ENCODE measurements at regions of chr15 and their contacts with region 1.

Region 1: DNA sequence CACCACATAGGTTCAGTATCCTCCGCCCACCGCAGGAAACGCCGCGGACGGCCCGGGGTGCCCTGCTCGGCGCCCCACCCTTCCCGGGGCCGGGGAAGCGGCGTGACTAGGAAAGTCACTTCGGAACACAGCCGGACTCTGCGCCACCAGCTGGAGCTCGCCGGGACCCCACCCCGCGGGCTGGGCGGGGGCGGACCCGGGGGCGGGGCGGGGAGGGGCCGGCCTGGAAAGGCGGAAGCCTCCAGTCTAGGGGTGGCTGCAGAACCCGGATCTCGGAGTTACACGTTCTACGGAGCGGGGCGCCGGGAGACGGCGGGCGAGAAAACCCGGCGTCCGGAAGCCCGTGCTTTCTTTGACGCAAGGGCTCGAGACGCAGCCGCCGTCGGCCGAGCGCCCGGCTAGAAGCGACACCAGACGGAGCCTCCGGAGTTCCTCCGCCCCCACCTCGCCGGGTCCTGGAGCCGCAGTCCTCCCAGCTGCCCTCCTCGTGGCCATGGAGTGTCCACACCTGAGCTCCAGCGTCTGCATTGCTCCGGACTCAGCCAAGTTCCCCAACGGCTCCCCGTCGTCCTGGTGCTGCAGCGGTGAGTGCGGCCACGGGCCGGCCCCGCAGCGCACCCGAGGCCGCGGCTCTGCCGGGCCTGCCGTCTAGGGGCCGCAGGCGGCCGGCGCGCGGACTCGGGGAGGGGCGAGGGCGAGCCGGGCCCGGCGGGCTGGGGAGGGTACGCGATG is at the start of gene USP3:
- DNase-seq: peak; percentile 86
- ATAC-seq: peak; percentile 83
- H3K4me3 ChIP-seq: peak within 1 kb of the TSS; percentile 86 to 91 (median 90)
- H3K27ac ChIP-seq: peak within 1 kb of the TSS; percentile 93
- H3K4me1 ChIP-seq: peaks cover 67% of the 10 kb centered on the region
- H3K27me3 ChIP-seq: no peaks in the 10 kb centered on the region; a peak in 1 of 5 replicates
- CTCF ChIP-seq: peak; percentile 38
- EP300 ChIP-seq: peak; percentile 46 to 61; a peak in 1 of 4 replicates
- POLR2A ChIP-seq: peak; percentile 80 to 84
- RAD21 ChIP-seq: 0 out of 2 replicates have a peak, but pooled peaks have one; percentile 26
- total RNA-seq, gene USP3: 55.9 and 61.2 TPM in 2 replicates

Region 2: GRCh38 chr15:63466378-63467192 is 37.8 kb before region 1 on chr15:
- CTCF ChIA-PET with region 1: no interaction called
- POLR2A ChIA-PET with region 1: interaction called, 5 read pairs
- in situ Hi-C with region 1: loop called (anchors 5 kb)
- intact Hi-C with region 1: no loop called
- DNase-seq: peak; percentile 66
- ATAC-seq: peak; percentile 87
- H3K4me3 ChIP-seq: peak overlapping the region in 1 of 3 experiments; percentile 44; a peak in 2 of 6 replicates
- H3K27ac ChIP-seq: peak overlapping the region; percentile 33
- H3K4me1 ChIP-seq: peaks cover 70% of the 10 kb centered on the region
- H3K27me3 ChIP-seq: no peaks in the 10 kb centered on the region
- CTCF ChIP-seq: peak; percentile 89
- EP300 ChIP-seq: peak in 1 of 2 experiments; percentile 78; a peak in 2 of 4 replicates
- POLR2A ChIP-seq: no peak
- RAD21 ChIP-seq: peak; percentile 60

Region 3: DNA sequence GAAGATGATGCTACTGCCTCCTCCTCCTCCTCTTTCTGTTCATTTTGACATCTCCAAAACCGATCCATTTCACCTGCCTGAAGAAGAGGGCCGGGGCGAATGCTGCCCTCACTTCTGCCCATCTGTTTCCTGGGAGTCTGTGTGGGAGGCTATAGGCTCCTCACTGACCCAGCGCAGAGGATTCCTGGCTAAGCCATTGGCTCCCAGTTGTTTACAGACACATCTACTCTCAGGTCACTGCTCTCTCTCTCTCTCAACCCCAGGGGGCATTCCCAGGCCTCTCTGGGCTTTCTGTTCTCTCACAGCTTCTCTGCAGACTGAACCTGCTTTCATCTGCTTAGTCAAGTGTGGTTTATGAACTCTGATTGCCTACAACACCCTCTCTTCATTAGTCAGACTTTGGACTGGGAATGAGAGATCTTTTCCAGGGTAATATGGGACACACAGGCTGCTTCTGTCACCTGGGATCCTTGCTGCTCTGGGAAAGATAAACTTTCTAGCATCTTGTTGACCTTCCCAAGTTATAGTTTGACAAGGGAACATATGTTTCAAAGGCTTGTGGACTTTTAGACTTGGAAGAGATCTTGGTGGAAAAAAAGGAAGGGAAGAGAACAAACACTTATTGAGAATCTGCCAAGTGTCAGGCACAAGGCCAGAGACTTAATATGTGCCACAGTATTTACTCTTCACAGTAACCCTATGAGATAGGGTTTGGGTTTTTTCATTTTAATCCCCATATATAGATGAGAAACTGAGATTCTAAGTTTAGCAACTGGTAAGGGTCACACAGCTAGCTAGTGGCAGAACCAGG is 30.2 kb before region 1 on chr15:
- CTCF ChIA-PET with region 1: no interaction called
- POLR2A ChIA-PET with region 1: interaction called, 82 read pairs
- in situ Hi-C with region 1: loop called (anchors 5 kb)
- intact Hi-C with region 1: loop called (anchors 1 kb)
- DNase-seq: peak; percentile 99
- ATAC-seq: peak; percentile 94
- H3K4me3 ChIP-seq: peak overlapping the region in 2 of 3 experiments; percentile 32 to 52; a peak in 4 of 6 replicates
- H3K27ac ChIP-seq: peak overlapping the region; percentile 90
- H3K4me1 ChIP-seq: peaks cover 72% of the 10 kb centered on the region
- H3K27me3 ChIP-seq: no peaks in the 10 kb centered on the region
- CTCF ChIP-seq: peak; percentile 54
- EP300 ChIP-seq: peak; percentile 76 to 94; a peak in 3 of 4 replicates
- POLR2A ChIP-seq: peak; percentile 76 to 77
- RAD21 ChIP-seq: peak; percentile 72

Region 4: GRCh38 chr15:63481105-63481810 is 23.2 kb before region 1 on chr15:
- CTCF ChIA-PET with region 1: no interaction called
- POLR2A ChIA-PET with region 1: interaction called, 82 read pairs
- in situ Hi-C with region 1: no loop called
- intact Hi-C with region 1: no loop called
- DNase-seq: no peak
- ATAC-seq: peak; percentile 15; the same call in 1 of the 3 replicates
- H3K4me3 ChIP-seq: no peak overlapping the region; a peak in 1 of 6 replicates
- H3K27ac ChIP-seq: peak overlapping the region; percentile 76
- H3K4me1 ChIP-seq: peaks cover 88% of the 10 kb centered on the region
- H3K27me3 ChIP-seq: no peaks in the 10 kb centered on the region
- CTCF ChIP-seq: no peak
- EP300 ChIP-seq: no peak
- POLR2A ChIP-seq: no peak
- RAD21 ChIP-seq: no peak

Region 5: DNA sequence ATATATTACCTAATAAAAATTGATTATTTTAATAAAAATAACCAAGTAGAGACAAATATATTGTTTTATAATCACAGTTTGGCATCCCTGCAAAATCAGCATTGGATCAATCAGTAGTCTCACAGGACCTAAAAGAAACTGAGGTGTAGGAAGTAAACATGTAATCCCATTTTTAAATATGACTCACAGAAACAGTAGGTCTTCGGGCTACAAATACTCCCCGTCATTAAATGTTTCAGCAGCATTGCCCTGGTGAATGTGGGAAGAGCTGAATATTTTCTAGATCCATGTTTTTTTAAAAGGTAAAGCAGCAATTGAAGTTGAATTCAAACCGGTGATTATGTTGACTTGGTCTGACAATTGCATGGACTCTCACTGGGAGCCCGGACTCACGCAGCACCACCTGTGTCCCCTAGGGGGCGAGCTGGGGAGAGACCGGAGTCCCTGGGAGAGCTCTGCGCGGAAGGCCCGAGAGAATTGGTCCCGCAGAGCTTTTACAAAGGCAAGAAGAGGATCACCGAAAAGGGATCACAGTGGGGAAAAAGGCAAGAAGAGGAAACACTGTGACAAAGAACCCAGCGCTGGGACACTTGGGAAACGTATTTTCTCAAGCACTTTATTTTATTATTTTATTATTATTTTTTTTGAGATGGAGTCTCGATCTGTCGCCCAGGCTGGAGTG is 17.2 kb before region 1 on chr15:
- CTCF ChIA-PET with region 1: no interaction called
- POLR2A ChIA-PET with region 1: interaction called, 52 read pairs
- in situ Hi-C with region 1: no loop called
- intact Hi-C with region 1: no loop called
- DNase-seq: peak; percentile 66
- ATAC-seq: peak; percentile 94
- H3K4me3 ChIP-seq: peak overlapping the region in 2 of 3 experiments; percentile 23 to 48; a peak in 2 of 6 replicates
- H3K27ac ChIP-seq: peak overlapping the region; percentile 47
- H3K4me1 ChIP-seq: peaks cover 61% of the 10 kb centered on the region
- H3K27me3 ChIP-seq: no peaks in the 10 kb centered on the region
- CTCF ChIP-seq: peak; percentile 88
- EP300 ChIP-seq: 0 out of 4 replicates have a peak, but pooled peaks of 1 of the 2 experiments have one; percentile 19
- POLR2A ChIP-seq: no peak
- RAD21 ChIP-seq: peak; percentile 86

Region 6: GRCh38 chr15:63514531-63514943 is 10.1 kb after region 1 on chr15:
- CTCF ChIA-PET with region 1: no interaction called
- POLR2A ChIA-PET with region 1: interaction called, 13 read pairs
- in situ Hi-C with region 1: no loop called
- intact Hi-C with region 1: loop called (anchors 1 kb)
- DNase-seq: peak; percentile 76
- ATAC-seq: peak; percentile 48; the same call in 1 of the 3 replicates
- H3K4me3 ChIP-seq: peak overlapping the region in 2 of 3 experiments; percentile 3 to 29; a peak in 1 of 6 replicates
- H3K27ac ChIP-seq: peak overlapping the region; percentile 56
- H3K4me1 ChIP-seq: peaks cover 97% of the 10 kb centered on the region
- H3K27me3 ChIP-seq: no peaks in the 10 kb centered on the region
- CTCF ChIP-seq: no peak
- EP300 ChIP-seq: peak in 1 of 2 experiments; percentile 48; a peak in 2 of 4 replicates
- POLR2A ChIP-seq: no peak
- RAD21 ChIP-seq: no peak

Region 7: GRCh38 chr15:63600616-63601025 is 96.2 kb after region 1 on chr15:
- CTCF ChIA-PET with region 1: no interaction called
- POLR2A ChIA-PET with region 1: interaction called, 31 read pairs
- in situ Hi-C with region 1: no loop called
- intact Hi-C with region 1: no loop called
- DNase-seq: peak; percentile 78
- ATAC-seq: peak; percentile 75
- H3K4me3 ChIP-seq: peak overlapping the region; percentile 61 to 88 (median 79)
- H3K27ac ChIP-seq: peak overlapping the region; percentile 83
- H3K4me1 ChIP-seq: peaks cover 41% of the 10 kb centered on the region
- H3K27me3 ChIP-seq: no peaks in the 10 kb centered on the region; a peak in 1 of 5 replicates
- CTCF ChIP-seq: peak; percentile 13; the same call in 1 of the 2 replicates
- EP300 ChIP-seq: no peak
- POLR2A ChIP-seq: peak in 1 of 2 experiments; percentile 87; a peak in 2 of 4 replicates
- RAD21 ChIP-seq: peak; percentile 53; the same call in 1 of the 2 replicates